ENCODE measurements at regions of chr1 and their contacts with region 1.

Region 1: DNA sequence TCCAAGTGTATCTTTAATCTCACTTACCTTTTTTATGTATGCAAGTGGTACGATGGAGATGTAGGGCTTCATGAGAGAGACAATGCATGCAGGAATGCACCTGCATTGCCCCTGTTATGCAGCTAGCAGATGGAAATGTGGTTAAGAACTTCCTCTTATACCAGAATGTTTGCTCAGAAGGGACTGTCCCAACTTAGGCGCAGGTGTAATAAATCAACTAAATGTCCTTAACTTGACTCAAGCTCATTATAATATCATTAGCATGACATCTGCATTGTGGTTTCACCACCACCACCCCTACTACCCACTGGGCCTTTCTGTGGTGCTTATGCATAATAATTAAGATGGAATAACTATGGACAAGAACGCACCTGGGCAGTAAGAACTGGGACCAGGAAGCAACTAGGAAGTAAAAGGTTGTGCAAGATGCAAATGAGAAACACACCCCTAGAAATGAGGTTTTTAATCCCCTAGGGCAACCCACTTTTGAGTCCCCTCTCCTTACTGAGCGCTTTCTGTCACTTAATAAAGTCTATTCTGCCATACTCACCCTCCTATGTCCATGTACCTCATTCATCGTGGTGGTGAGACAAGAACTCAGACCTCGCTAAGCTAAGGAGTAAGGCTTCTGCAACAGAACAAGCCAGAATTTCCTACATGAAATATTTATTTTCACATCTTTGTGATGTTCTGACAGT is 1103.3 kb upstream of the B3GALT2 start:
- DNase-seq: peak in 8 of 9 donors; percentile 23 to 84 (median 76)
- ATAC-seq: peak; percentile 97
- H3K4me3 ChIP-seq: peak overlapping the region; percentile 0
- H3K4me3 Mint-ChIP-seq: peak overlapping the region; percentile 38 to 71 (median 54)
- H3K27ac ChIP-seq: no peak overlapping the region
- H3K27ac Mint-ChIP-seq: peak overlapping the region in 7 of 9 donors; percentile 43 to 84 (median 69)
- H3K4me1 ChIP-seq: peaks cover 14 to 21% of the 10 kb centered on the region in 2 donors
- H3K4me1 Mint-ChIP-seq: peaks cover 5 to 47% (median 40%) of the 10 kb centered on the region in 7 donors
- H3K27me3 ChIP-seq: no peaks in the 10 kb centered on the region
- H3K27me3 Mint-ChIP-seq: no peaks in the 10 kb centered on the region

Region 2: DNA sequence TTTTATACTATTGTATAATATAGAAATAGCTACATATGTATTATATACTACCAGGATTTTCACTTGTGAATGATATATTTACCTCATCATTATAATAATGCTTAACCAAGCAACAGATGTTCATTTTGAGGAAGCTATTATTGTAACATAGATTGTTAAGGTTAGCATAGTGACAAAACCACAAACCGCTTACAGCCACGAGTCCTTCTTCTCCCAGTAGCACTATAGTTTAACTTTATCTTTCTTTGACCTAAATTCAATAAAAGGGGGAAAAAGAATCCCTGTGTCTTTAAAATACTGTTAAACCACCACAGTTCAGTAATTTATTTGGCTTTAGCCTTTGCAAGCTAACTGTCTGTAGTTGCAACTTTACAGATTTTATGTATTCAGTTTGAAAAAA is 63.9 kb before region 1 on chr1:
- CTCF ChIA-PET with region 1: no interaction called
- POLR2A ChIA-PET with region 1: no interaction called
- intact Hi-C with region 1: loop called in 1 of 2 experiments (anchors 2 kb)
- DNase-seq: peak in 4 of 9 donors; percentile 3 to 31 (median 11)
- ATAC-seq: peak; percentile 69
- H3K4me3 ChIP-seq: no peak overlapping the region
- H3K4me3 Mint-ChIP-seq: peak overlapping the region in 5 of 10 donors; percentile 32 to 57 (median 49)
- H3K27ac ChIP-seq: no peak overlapping the region
- H3K27ac Mint-ChIP-seq: peak overlapping the region in 2 of 9 donors; percentile 10 to 34
- H3K4me1 ChIP-seq: peaks cover 6 to 10% of the 10 kb centered on the region in 2 donors
- H3K4me1 Mint-ChIP-seq: peaks cover 5 to 25% (median 19%) of the 10 kb centered on the region in 7 donors
- H3K27me3 ChIP-seq: no peaks in the 10 kb centered on the region
- H3K27me3 Mint-ChIP-seq: no peaks in the 10 kb centered on the region

Measured in naive thymus-derived CD4-positive, alpha-beta T cell (primary cell).